Calu3 (cell line): ENCODE measurements at regions of chr5 and their contacts with region 1.

Region 1: DNA sequence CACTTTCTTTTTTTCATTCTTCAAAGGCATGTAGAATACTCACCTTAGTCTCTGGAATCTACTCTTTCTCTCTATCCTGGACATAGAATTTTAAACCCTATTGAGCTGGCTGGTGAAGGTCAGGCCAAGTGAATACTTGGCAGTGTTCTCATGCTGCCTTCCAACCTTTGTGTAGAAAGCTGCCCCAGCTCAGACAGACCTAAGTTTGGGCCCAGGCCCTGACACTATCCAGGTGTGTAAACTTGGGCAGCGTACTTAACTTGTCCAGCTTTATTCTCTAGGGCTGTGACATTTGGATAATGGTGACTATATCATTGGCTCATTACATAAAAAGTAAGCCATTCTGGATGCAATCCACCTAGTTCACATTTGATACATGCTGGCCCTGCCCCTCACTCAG is 298.3 kb downstream of the IRX1 start:
- DNase-seq: no peak
- H3K4me3 Mint-ChIP-seq: no peak overlapping the region
- H3K27ac Mint-ChIP-seq: no peak overlapping the region
- H3K4me1 Mint-ChIP-seq: no peaks in the 10 kb centered on the region
- H3K27me3 Mint-ChIP-seq: no peaks in the 10 kb centered on the region
- CTCF ChIP-seq: no peak

Region 2: DNA sequence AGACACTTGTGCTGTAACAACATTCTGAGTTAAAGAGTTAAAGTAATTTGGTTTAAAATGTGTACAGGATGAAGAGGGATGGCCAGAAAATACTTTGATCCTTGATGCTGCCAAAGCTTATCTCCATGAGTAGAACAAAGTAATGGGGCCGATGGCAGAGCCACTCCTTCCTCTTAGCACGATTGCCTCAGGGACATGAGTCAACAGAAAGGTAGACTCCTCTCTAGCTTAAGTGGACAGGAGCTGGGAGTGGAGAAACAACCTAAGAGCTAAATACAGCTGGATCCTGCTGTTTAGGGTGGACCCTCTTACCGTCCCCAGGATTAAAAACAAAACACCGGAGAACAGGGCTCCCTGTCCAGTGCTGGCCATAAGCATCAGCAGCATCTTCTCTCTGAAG is 31.1 kb before region 1 on chr5:
- CTCF ChIA-PET with region 1: no interaction called
- intact Hi-C with region 1: loop called (anchors 2 kb)
- DNase-seq: no peak
- H3K4me3 Mint-ChIP-seq: no peak overlapping the region
- H3K27ac Mint-ChIP-seq: no peak overlapping the region
- H3K4me1 Mint-ChIP-seq: no peaks in the 10 kb centered on the region
- H3K27me3 Mint-ChIP-seq: no peaks in the 10 kb centered on the region
- CTCF ChIP-seq: no peak

Region 3: DNA sequence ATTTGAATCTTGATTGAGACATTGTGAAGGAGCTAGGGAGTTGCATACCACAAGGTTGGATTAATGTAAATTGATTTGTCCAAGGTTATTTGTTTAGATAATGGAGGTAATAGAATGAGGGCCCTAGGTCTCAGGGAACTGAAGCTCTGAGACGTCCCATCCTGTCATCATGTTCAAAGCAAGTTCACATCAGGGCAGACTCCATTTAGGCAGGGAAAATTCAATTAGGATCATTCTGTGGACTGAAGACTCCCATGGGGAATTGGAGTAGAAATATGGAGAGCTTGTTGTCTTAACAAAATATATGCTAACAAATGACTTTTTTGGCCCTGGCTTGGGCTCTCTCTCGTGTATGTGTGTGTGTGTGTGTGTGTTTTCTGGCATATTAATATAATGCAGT is 524.1 kb after region 1 on chr5:
- CTCF ChIA-PET with region 1: no interaction called
- intact Hi-C with region 1: no loop called
- DNase-seq: no peak
- H3K4me3 Mint-ChIP-seq: no peak overlapping the region
- H3K27ac Mint-ChIP-seq: no peak overlapping the region
- H3K4me1 Mint-ChIP-seq: no peaks in the 10 kb centered on the region
- H3K27me3 Mint-ChIP-seq: no peaks in the 10 kb centered on the region
- CTCF ChIP-seq: no peak